ENCODE measurements at regions of chr2 and their contacts with region 1.

Region 1: GRCh38 chr2:216151313-216152030 is 42.3 kb downstream of the XRCC5 start:
- DNase-seq: no peak
- H3K4me3 Mint-ChIP-seq: no peak overlapping the region
- H3K27ac Mint-ChIP-seq: peak overlapping the region; percentile 2
- H3K4me1 Mint-ChIP-seq: peaks cover 34% of the 10 kb centered on the region
- H3K27me3 Mint-ChIP-seq: no peaks in the 10 kb centered on the region

Region 2: DNA sequence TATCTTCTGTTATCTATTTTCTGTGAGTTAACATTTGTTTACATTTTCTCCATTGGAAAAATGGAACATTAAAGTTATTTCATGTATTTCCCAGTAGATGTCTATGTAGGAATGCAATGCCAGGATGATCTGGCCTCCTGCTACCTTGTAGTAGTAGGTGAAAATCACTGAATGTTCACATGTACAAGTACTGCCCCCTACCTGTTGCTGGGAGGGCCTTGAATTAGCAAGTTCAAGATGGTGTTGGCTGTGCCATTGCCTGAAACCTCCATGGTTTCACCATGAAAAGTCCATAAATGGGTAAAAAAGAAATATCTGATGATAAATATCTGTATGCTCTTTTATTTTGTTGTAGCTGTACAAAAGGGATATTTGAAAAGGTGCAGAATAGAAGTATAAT is 11.6 kb before region 1 on chr2:
- CTCF ChIA-PET with region 1: interaction called, 6 read pairs
- POLR2A ChIA-PET with region 1: interaction called, 11 read pairs
- DNase-seq: peak; percentile 32
- H3K4me3 Mint-ChIP-seq: no peak overlapping the region
- H3K27ac Mint-ChIP-seq: no peak overlapping the region
- H3K4me1 Mint-ChIP-seq: peaks cover 31% of the 10 kb centered on the region
- H3K27me3 Mint-ChIP-seq: no peaks in the 10 kb centered on the region

Measured in activated CD4-positive, alpha-beta memory T cell treated with anti-CD3 and anti-CD28 coated beads, Interleukin-2, amount 10 ng/mL, durations not matched to agents 7 days and 5 days (primary cell).